Panc1 (cell line): ENCODE measurements at regions of chr13 and their contacts with region 1.

Region 1: DNA sequence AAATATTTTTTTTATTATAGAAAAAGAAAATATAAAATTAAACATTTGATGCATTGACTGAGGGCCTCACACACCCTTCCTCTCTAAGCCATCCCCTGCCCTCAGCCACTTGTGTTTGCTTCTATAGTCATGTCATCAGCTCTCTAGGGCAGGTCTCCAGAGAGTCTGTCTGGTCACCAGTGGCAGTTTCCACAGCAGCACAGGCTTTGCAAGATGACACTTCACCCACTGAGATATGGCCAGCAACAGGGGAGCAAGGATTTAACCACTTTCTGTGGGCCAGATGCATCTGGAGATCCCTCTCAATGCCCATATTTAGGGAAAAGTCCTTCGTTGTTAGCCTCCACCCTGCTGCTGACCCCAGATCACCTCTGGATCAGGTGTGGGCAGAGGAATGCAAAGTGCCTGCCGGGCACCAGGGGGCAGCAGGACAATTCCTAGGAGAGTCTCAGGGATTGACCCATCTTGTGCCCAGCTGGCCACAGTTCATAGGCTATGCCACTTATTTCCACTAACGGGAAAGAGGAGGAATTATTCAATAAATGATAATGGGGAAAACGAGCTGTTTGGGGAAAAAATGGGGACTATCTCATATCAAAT is 4.8 kb downstream of the ABCC4 start:
- DNase-seq: no peak
- ATAC-seq: no peak
- H3K4me3 ChIP-seq: no peak overlapping the region
- H3K27ac ChIP-seq: peak overlapping the region; percentile 70
- H3K4me1 ChIP-seq: peaks cover 27% of the 10 kb centered on the region
- H3K27me3 ChIP-seq: no peaks in the 10 kb centered on the region
- CTCF ChIP-seq: peak; percentile 81

Region 2: GRCh38 chr13:95182570-95183265 is 113.7 kb before region 1 on chr13:
- CTCF ChIA-PET with region 1: no interaction called
- POLR2A ChIA-PET with region 1: no interaction called
- in situ Hi-C with region 1: no loop called
- intact Hi-C with region 1: no loop called
- DNase-seq: no peak
- ATAC-seq: no peak
- H3K4me3 ChIP-seq: no peak overlapping the region
- H3K27ac ChIP-seq: no peak overlapping the region
- H3K4me1 ChIP-seq: no peaks in the 10 kb centered on the region
- H3K27me3 ChIP-seq: no peaks in the 10 kb centered on the region
- CTCF ChIP-seq: no peak

Region 3: DNA sequence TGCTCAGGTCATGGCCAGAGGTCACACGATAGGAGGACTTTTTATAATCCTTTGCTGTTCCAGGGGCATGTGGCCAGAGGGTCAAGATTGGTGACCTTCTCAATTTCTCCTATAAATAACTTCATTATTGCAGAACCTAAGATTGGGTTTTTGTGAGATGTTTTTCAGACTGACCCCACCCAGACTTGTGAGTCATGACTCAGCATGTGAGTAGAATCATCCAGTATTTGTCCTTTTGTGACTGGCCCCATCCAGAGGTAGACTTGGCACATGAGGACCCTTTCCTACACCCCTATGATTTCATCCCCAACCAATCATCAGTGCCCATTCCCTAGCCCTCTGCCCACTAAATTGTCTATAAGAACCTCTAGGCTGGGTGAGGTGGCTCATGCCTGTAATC is 89.4 kb after region 1 on chr13:
- CTCF ChIA-PET with region 1: interaction called, 4 read pairs
- POLR2A ChIA-PET with region 1: interaction called, 4 read pairs
- in situ Hi-C with region 1: no loop called
- intact Hi-C with region 1: loop called (anchors 5 kb)
- DNase-seq: no peak
- ATAC-seq: no peak
- H3K4me3 ChIP-seq: no peak overlapping the region
- H3K27ac ChIP-seq: no peak overlapping the region
- H3K4me1 ChIP-seq: no peaks in the 10 kb centered on the region; the same call in 1 of the 2 replicates
- H3K27me3 ChIP-seq: no peaks in the 10 kb centered on the region
- CTCF ChIP-seq: no peak